ENCODE measurements at regions of chr13 and their contacts with region 1.

Region 1: GRCh38 chr13:90142251-90142650 is 1205.2 kb upstream of the MIR17HG start:
- DNase-seq: no peak
- ATAC-seq: no peak
- H3K4me3 ChIP-seq: no peak overlapping the region
- H3K4me3 Mint-ChIP-seq: no peak overlapping the region
- H3K27ac ChIP-seq: no peak overlapping the region
- H3K27ac Mint-ChIP-seq: no peak overlapping the region
- H3K4me1 ChIP-seq: no peaks in the 10 kb centered on the region
- H3K4me1 Mint-ChIP-seq: no peaks in the 10 kb centered on the region
- H3K27me3 ChIP-seq: no peaks in the 10 kb centered on the region
- H3K27me3 Mint-ChIP-seq: no peaks in the 10 kb centered on the region
- CTCF ChIP-seq: no peak

Region 2: DNA sequence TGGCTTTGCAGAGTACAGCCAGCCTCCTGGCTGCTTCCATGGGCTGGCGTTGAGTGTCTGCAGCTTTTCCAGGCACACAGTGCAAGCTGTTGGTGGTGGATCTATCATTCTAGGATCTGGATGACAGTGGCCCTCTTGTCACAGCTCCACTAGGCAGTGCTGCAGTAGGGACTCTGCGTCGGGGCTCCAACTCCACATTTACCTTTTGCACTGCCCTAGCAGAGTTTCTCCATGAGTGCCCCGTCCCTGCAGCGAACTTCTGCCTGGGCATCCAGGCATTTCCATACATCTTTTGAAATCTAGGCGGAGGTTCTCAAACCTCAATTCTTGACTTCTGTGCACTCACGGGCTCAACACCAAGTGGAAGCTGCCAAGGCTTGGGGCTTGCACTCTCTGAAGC is 492.0 kb before region 1 on chr13:
- CTCF ChIA-PET with region 1: no interaction called
- POLR2A ChIA-PET with region 1: no interaction called
- intact Hi-C with region 1: loop called (anchors 10 kb)
- DNase-seq: no peak
- ATAC-seq: no peak
- H3K4me3 ChIP-seq: no peak overlapping the region
- H3K4me3 Mint-ChIP-seq: no peak overlapping the region
- H3K27ac ChIP-seq: no peak overlapping the region
- H3K27ac Mint-ChIP-seq: no peak overlapping the region
- H3K4me1 ChIP-seq: no peaks in the 10 kb centered on the region
- H3K4me1 Mint-ChIP-seq: no peaks in the 10 kb centered on the region
- H3K27me3 ChIP-seq: no peaks in the 10 kb centered on the region
- H3K27me3 Mint-ChIP-seq: no peaks in the 10 kb centered on the region
- CTCF ChIP-seq: no peak

Region 3: DNA sequence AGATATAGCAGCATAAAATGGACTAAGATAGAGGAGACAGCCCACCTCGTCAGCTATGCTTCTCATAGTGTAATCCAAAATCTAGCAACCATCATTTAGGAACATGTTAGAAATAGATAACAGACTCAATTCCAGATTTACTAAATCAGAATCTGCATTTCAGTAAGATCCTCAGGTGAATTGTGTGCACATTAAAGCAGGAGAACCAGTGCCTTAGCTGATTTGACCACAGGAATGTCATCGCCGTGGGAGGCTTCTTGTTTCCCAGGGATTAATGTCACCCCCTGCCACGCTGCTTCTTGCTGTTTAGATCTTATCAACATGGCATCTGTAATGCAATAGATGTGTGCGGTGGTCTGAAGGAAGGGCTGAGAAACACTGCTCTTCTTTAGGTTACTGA is 1340.2 kb after region 1 on chr13:
- CTCF ChIA-PET with region 1: no interaction called
- POLR2A ChIA-PET with region 1: no interaction called
- intact Hi-C with region 1: no loop called
- DNase-seq: no peak
- ATAC-seq: no peak
- H3K4me3 ChIP-seq: no peak overlapping the region
- H3K4me3 Mint-ChIP-seq: no peak overlapping the region
- H3K27ac ChIP-seq: no peak overlapping the region
- H3K27ac Mint-ChIP-seq: no peak overlapping the region
- H3K4me1 ChIP-seq: no peaks in the 10 kb centered on the region
- H3K4me1 Mint-ChIP-seq: no peaks in the 10 kb centered on the region
- H3K27me3 ChIP-seq: no peaks in the 10 kb centered on the region
- H3K27me3 Mint-ChIP-seq: no peaks in the 10 kb centered on the region
- CTCF ChIP-seq: no peak

Measured in B cell (primary cell).